ENCODE measurements at regions of chr19 and their contacts with region 1.

Region 1: GRCh38 chr19:1189419-1189818 is 15.4 kb upstream of the SBNO2 start:
- DNase-seq: peak; percentile 54
- H3K4me3 Mint-ChIP-seq: no peak overlapping the region
- H3K27ac Mint-ChIP-seq: peak overlapping the region; percentile 34
- H3K4me1 Mint-ChIP-seq: peaks cover 35% of the 10 kb centered on the region
- H3K27me3 Mint-ChIP-seq: no peaks in the 10 kb centered on the region

Region 2: GRCh38 chr19:1113033-1113985 is 76.1 kb before region 1 on chr19:
- CTCF ChIA-PET with region 1: interaction called, 16 read pairs
- POLR2A ChIA-PET with region 1: no interaction called
- DNase-seq: peak; percentile 81
- H3K4me3 Mint-ChIP-seq: no peak overlapping the region
- H3K27ac Mint-ChIP-seq: no peak overlapping the region
- H3K4me1 Mint-ChIP-seq: peaks cover 4% of the 10 kb centered on the region
- H3K27me3 Mint-ChIP-seq: no peaks in the 10 kb centered on the region

Region 3: DNA sequence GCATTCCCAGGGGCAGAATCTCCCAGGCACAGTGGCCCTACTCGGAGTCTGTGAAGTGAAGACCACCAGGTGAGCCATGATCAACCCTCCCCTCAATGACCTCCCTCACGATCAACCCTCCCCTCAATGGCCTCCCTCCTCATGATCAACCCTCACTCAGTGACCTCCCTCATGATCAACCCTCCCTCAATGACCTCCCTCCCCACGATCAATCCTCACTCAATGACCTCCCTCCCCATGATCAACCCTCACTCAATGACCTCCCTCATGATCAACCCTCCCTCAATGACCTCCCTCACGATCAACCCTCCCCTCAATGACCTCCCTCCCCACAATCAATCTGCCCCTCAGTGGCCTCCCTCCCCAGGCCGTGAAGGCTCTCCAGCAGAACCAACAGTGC is 47.5 kb before region 1 on chr19:
- CTCF ChIA-PET with region 1: no interaction called
- POLR2A ChIA-PET with region 1: no interaction called
- DNase-seq: no peak
- H3K4me3 Mint-ChIP-seq: no peak overlapping the region
- H3K27ac Mint-ChIP-seq: no peak overlapping the region
- H3K4me1 Mint-ChIP-seq: peaks cover 6% of the 10 kb centered on the region
- H3K27me3 Mint-ChIP-seq: no peaks in the 10 kb centered on the region

Region 4: GRCh38 chr19:1205114-1206062 is 16.0 kb after region 1 on chr19 and contains the start of gene STK11:
- CTCF ChIA-PET with region 1: interaction called, 12 read pairs
- POLR2A ChIA-PET with region 1: no interaction called
- DNase-seq: peak; percentile 100
- H3K4me3 Mint-ChIP-seq: peak within 1 kb of the TSS; percentile 92
- H3K27ac Mint-ChIP-seq: peak within 1 kb of the TSS; percentile 85
- H3K4me1 Mint-ChIP-seq: peaks cover 36% of the 10 kb centered on the region
- H3K27me3 Mint-ChIP-seq: no peaks in the 10 kb centered on the region
- total RNA-seq, gene STK11: 84.2 to 85.1 TPM